Activated CD4-positive, alpha-beta T cell treated with anti-CD3 and anti-CD28 coated beads for 36 hours (primary cell): ENCODE measurements at regions of chr1 and their contacts with region 1.

Region 1: DNA sequence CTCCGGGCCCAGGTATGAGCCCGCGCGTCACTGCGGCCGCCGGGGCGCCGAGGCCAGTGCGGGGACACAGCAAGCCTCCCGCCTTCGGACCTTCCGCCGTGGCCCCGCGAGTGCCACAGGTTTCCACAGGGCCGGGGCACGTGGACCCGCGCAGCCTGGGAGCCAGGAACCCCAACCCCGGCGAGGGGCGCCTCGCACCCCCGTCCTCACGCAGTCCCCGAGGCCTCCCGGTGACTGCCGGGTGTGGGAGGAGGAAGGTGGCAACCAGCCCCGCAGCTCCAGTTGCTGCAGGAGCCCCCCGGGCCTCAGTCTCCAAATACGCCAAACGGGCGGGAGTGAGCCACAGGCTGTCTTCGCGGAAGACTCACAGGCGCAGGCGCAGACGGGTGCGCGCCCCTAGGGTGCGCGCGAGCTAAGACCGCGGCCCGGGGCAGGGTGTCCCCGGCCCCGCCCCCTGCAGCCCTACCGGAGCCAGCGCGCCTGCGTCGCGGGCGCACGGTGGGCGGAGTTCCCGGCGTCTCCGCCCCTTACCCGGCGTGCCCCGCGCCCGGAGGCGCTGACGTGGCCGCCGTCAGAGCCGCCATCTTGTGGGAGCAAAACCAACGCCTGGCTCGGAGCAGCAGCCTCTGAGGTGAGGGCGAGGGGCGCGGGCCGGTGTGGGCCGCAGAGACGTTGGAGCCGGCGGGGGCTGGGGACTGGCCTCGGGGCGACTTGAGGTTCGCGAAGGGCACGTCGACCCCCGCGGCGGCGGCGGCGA is at the start of gene ARF1:
- DNase-seq: peak; percentile 95
- ATAC-seq: peak; percentile 86
- H3K4me3 Mint-ChIP-seq: peak within 1 kb of the TSS; percentile 92
- H3K27ac Mint-ChIP-seq: peak within 1 kb of the TSS; percentile 93
- H3K4me1 Mint-ChIP-seq: peaks cover 42% of the 10 kb centered on the region
- H3K27me3 Mint-ChIP-seq: no peaks in the 10 kb centered on the region
- total RNA-seq, gene ARF1: 325 to 337 TPM

Region 2: GRCh38 chr1:227563324-227564201 is 518.8 kb before region 1 on chr1 and contains the start of gene ZNF678:
- CTCF ChIA-PET with region 1: no interaction called
- POLR2A ChIA-PET with region 1: no interaction called
- intact Hi-C with region 1: loop called in 1 of 2 experiments (anchors 2 kb)
- DNase-seq: peak; percentile 95
- ATAC-seq: peak; percentile 96
- H3K4me3 Mint-ChIP-seq: peak within 1 kb of the TSS; percentile 90
- H3K27ac Mint-ChIP-seq: peak within 1 kb of the TSS; percentile 93
- H3K4me1 Mint-ChIP-seq: peaks cover 34% of the 10 kb centered on the region
- H3K27me3 Mint-ChIP-seq: peaks cover 25% of the 10 kb centered on the region
- total RNA-seq, gene ZNF678: 7.0 to 7.7 TPM

Region 3: GRCh38 chr1:227999056-227999930 is 83.0 kb before region 1 on chr1:
- CTCF ChIA-PET with region 1: interaction called, 3 read pairs
- POLR2A ChIA-PET with region 1: no interaction called
- intact Hi-C with region 1: loop called in 1 of 2 experiments (anchors 5 kb)
- DNase-seq: peak; percentile 87
- ATAC-seq: peak; percentile 98
- H3K4me3 Mint-ChIP-seq: no peak overlapping the region
- H3K27ac Mint-ChIP-seq: no peak overlapping the region
- H3K4me1 Mint-ChIP-seq: no peaks in the 10 kb centered on the region
- H3K27me3 Mint-ChIP-seq: peaks cover 18% of the 10 kb centered on the region

Region 4: GRCh38 chr1:228102791-228103620 is 20.7 kb after region 1 on chr1 and contains the start of gene C1orf35:
- CTCF ChIA-PET with region 1: interaction called, 3 read pairs
- POLR2A ChIA-PET with region 1: interaction called, 5 read pairs
- intact Hi-C with region 1: loop called (anchors 1 kb)
- DNase-seq: peak; percentile 97
- ATAC-seq: peak; percentile 90
- H3K4me3 Mint-ChIP-seq: peak within 1 kb of the TSS; percentile 89
- H3K27ac Mint-ChIP-seq: peak within 1 kb of the TSS; percentile 91
- H3K4me1 Mint-ChIP-seq: peaks cover 22% of the 10 kb centered on the region
- H3K27me3 Mint-ChIP-seq: no peaks in the 10 kb centered on the region
- total RNA-seq, gene C1orf35: 14.6 to 22.5 TPM

Region 5: GRCh38 chr1:228165372-228166169 is 83.3 kb after region 1 on chr1 and contains the start of gene IBA57:
- CTCF ChIA-PET with region 1: interaction called, 5 read pairs
- POLR2A ChIA-PET with region 1: interaction called, 3 read pairs
- intact Hi-C with region 1: loop called (anchors 1 to 2 kb)
- DNase-seq: peak; percentile 100
- ATAC-seq: peak; percentile 89
- H3K4me3 Mint-ChIP-seq: peak within 1 kb of the TSS; percentile 80
- H3K27ac Mint-ChIP-seq: peak within 1 kb of the TSS; percentile 87
- H3K4me1 Mint-ChIP-seq: peaks cover 35% of the 10 kb centered on the region
- H3K27me3 Mint-ChIP-seq: no peaks in the 10 kb centered on the region
- total RNA-seq, gene IBA57: 6.0 to 8.3 TPM

Region 6: DNA sequence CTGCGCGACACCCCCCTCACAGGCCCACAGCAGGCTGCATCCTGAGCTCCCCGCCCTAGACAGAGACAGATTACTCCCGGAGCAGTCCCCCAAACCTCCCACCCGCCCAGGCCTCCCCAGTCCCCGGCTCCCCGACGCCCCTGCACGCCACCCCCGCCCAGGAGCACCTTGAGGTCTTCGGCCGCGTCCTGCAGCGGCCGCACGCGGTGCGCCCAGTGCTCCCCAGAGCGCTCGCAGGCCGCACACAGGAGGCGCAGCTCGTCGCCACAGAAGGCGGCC is 323.6 kb after region 1 on chr1:
- CTCF ChIA-PET with region 1: no interaction called
- POLR2A ChIA-PET with region 1: no interaction called
- intact Hi-C with region 1: loop called in 1 of 2 experiments (anchors 1 kb)
- DNase-seq: no peak
- ATAC-seq: peak; percentile 2
- H3K4me3 Mint-ChIP-seq: peak overlapping the region; percentile 92
- H3K27ac Mint-ChIP-seq: peak overlapping the region; percentile 93
- H3K4me1 Mint-ChIP-seq: peaks cover 46% of the 10 kb centered on the region
- H3K27me3 Mint-ChIP-seq: no peaks in the 10 kb centered on the region

Region 7: GRCh38 chr1:228486596-228487335 is 404.5 kb after region 1 on chr1:
- CTCF ChIA-PET with region 1: no interaction called
- POLR2A ChIA-PET with region 1: no interaction called
- intact Hi-C with region 1: loop called in 1 of 2 experiments (anchors 1 kb)
- DNase-seq: peak; percentile 87
- ATAC-seq: peak; percentile 66
- H3K4me3 Mint-ChIP-seq: peak overlapping the region; percentile 96
- H3K27ac Mint-ChIP-seq: peak overlapping the region; percentile 99
- H3K4me1 Mint-ChIP-seq: peaks cover 40% of the 10 kb centered on the region
- H3K27me3 Mint-ChIP-seq: no peaks in the 10 kb centered on the region